Endothelial cell of umbilical vein (primary cell): ENCODE measurements at regions of chr9 and their contacts with region 1.

Region 1: DNA sequence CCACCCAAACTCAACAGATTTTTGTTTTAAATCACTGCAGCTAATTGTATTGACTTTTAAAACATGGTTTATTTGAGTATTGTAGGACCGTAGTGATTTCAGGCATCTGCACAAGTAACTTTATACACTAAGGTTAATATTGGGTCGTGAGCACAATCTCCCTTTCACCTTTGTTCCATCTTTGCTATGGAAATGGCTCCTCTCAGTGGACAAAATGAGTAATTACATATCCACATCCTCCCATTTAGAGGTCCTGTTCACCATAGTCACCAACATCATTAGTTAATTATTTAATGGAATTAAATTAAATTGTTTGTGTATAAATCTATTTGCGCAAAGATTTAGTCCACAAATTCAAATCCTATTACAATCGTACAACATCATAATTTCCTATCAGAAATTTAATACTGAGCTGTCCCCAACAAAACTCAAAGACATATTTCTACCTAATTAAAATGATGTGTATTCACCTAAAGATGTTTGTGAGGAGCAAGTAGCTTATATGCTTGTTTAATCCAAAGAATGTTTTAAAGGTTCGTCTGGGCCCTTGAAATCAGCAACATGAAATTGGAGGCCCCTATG is 173.0 kb upstream of the DAPK1 start:
- DNase-seq: peak; percentile 60
- H3K4me3 ChIP-seq: no peak overlapping the region
- H3K27ac ChIP-seq: no peak overlapping the region
- H3K4me1 ChIP-seq: no peaks in the 10 kb centered on the region
- H3K27me3 ChIP-seq: no peaks in the 10 kb centered on the region
- CTCF ChIP-seq: peak; percentile 35 to 36
- POLR2A ChIP-seq: no peak

Region 2: GRCh38 chr9:86413966-86414880 is 910.5 kb before region 1 on chr9:
- CTCF ChIA-PET with region 1: interaction called, 43 read pairs
- POLR2A ChIA-PET with region 1: no interaction called
- dilution Hi-C with region 1: no loop called
- intact Hi-C with region 1: loop called (anchors 1 kb)
- DNase-seq: peak; percentile 47
- H3K4me3 ChIP-seq: no peak overlapping the region
- H3K27ac ChIP-seq: no peak overlapping the region
- H3K4me1 ChIP-seq: no peaks in the 10 kb centered on the region
- H3K27me3 ChIP-seq: no peaks in the 10 kb centered on the region
- CTCF ChIP-seq: peak; percentile 30 to 31
- POLR2A ChIP-seq: no peak

Region 3: DNA sequence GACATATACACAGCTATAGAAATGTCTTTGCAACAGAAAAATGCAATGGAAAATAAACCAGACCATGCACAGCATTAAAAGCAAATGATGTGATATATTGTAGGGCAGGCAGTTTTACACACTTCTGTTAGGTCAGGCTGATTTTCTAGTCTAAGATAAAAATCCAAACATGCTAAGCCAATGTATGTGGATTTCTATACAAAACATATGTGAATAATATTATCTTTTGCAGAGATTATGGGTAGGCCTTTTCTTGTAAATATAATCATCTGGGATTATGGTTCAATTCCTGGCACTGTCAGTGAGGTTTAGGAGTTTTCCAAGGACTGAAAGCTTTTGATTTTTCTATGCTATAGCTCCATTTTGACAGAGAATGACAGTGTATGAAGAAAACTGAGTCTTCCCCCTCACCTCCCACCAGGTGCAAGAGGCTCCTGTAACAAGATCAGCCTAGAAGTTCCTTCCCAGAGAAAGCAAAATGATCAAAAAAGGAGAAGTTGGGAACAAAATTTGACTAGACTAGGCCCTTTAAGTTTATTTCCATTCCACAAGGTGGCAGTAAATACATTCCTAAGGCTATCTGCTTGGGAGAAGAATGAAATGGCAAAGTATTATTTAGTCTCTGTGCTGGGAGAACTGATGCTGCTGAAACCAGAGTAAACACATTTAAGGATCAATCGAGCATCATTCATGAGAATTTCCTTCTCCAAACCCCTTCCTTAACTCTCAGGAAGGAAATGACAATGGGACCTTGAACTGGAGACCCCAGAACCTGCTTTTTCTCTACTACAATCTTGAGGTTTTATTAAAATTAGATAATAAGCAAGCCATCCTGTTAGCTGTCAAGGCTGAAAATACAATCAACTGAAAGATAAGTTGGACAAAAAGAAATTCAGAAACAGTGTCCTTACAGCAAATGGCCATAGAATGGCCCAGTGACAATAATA is 837.5 kb before region 1 on chr9:
- CTCF ChIA-PET with region 1: interaction called, 41 read pairs
- POLR2A ChIA-PET with region 1: no interaction called
- dilution Hi-C with region 1: no loop called
- intact Hi-C with region 1: loop called (anchors 1 kb)
- DNase-seq: peak; percentile 21
- H3K4me3 ChIP-seq: no peak overlapping the region
- H3K27ac ChIP-seq: no peak overlapping the region
- H3K4me1 ChIP-seq: no peaks in the 10 kb centered on the region
- H3K27me3 ChIP-seq: no peaks in the 10 kb centered on the region
- CTCF ChIP-seq: peak in 1 of 2 donors; percentile 35
- POLR2A ChIP-seq: no peak

Region 4: DNA sequence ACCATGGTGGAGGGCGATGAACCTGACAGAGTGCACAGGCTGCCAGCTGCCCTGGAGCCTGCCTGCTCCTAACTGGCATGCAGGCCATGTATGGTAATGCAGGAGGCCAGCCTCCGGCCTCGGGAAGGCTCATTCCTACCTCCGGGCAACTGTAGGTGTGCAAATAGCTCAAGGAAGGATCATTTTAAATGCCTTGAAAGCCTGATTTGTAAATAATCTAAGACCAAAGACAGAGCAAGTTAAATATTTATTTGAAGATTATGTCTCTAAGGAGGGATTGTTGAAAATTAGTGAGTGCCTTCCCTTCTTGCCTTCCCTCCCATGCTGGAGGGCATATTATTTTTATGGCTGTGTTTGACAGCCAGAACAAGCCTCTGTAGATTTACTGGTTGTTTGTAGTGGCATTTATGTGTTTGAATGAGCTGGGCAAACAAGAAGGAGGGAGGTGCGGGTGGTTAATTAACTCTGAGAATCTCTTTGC is 684.8 kb before region 1 on chr9:
- CTCF ChIA-PET with region 1: no interaction called
- POLR2A ChIA-PET with region 1: no interaction called
- dilution Hi-C with region 1: no loop called
- intact Hi-C with region 1: loop called (anchors 2 kb)
- DNase-seq: no peak
- H3K4me3 ChIP-seq: no peak overlapping the region
- H3K27ac ChIP-seq: no peak overlapping the region
- H3K4me1 ChIP-seq: no peaks in the 10 kb centered on the region
- H3K27me3 ChIP-seq: no peaks in the 10 kb centered on the region
- CTCF ChIP-seq: no peak
- POLR2A ChIP-seq: no peak

Region 5: GRCh38 chr9:87107072-87107471 is 217.6 kb before region 1 on chr9:
- CTCF ChIA-PET with region 1: no interaction called
- POLR2A ChIA-PET with region 1: no interaction called
- dilution Hi-C with region 1: no loop called
- intact Hi-C with region 1: loop called (anchors 1 kb)
- DNase-seq: peak; percentile 5
- H3K4me3 ChIP-seq: no peak overlapping the region
- H3K27ac ChIP-seq: no peak overlapping the region
- H3K4me1 ChIP-seq: no peaks in the 10 kb centered on the region
- H3K27me3 ChIP-seq: no peaks in the 10 kb centered on the region
- CTCF ChIP-seq: no peak
- POLR2A ChIP-seq: no peak

Region 6: GRCh38 chr9:87127978-87128614 is 196.6 kb before region 1 on chr9:
- CTCF ChIA-PET with region 1: no interaction called
- POLR2A ChIA-PET with region 1: no interaction called
- dilution Hi-C with region 1: no loop called
- intact Hi-C with region 1: no loop called
- DNase-seq: no peak
- H3K4me3 ChIP-seq: no peak overlapping the region
- H3K27ac ChIP-seq: no peak overlapping the region
- H3K4me1 ChIP-seq: no peaks in the 10 kb centered on the region
- H3K27me3 ChIP-seq: no peaks in the 10 kb centered on the region
- CTCF ChIP-seq: no peak
- POLR2A ChIP-seq: no peak